ENCODE measurements at regions of chr12 and their contacts with region 1.

Region 1: GRCh38 chr12:3186546-3187215 is 109.5 kb downstream of the TSPAN9 start:
- DNase-seq: no peak
- H3K4me3 ChIP-seq: no peak overlapping the region
- H3K27ac ChIP-seq: no peak overlapping the region
- H3K4me1 ChIP-seq: peaks cover 0 to 5% (median 0%) of the 10 kb centered on the region in 4 experiments; a peak in 2 of 7 replicates
- H3K27me3 ChIP-seq: no peaks in the 10 kb centered on the region
- CTCF ChIP-seq: no peak
- EP300 ChIP-seq: no peak
- POLR2A ChIP-seq: no peak
- RAD21 ChIP-seq: no peak

Region 2: DNA sequence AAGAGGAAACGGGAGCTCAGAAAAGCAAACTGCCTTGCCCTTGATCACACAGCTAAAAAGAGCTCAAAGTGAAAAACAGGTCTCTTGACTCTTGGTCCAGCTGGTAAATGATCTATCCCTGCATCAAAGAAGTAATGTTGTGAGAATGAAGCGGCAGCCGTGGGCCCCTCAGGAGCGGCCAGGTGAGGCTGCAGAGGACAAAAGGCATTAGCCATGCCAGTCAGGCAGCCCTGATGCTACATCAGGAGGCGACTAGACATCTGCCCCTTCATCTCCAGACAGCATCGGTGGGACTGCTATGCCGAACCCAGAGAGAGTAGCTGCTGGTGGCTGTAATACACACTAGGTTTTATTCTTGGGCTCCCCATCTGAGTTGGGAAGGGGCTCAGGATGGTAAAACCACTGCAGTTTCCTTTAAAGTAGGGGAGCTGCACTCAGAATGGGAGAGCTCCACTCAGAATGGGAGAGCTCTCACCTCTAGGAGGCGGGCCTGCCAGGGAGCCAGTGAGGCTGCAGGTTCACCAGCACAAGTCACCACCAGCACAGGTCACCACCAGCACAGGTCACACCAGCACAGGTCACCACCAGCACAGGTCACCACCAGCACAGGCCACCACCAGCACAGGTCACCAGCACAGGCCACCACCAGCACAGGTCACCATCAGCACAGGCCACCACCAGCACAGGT is 10.6 kb after region 1 on chr12:
- CTCF ChIA-PET with region 1: interaction called, 83 read pairs
- POLR2A ChIA-PET with region 1: interaction called, 8 read pairs
- DNase-seq: no peak
- H3K4me3 ChIP-seq: no peak overlapping the region
- H3K27ac ChIP-seq: no peak overlapping the region
- H3K4me1 ChIP-seq: peaks cover 0 to 15% (median 6%) of the 10 kb centered on the region in 4 experiments; a peak in 6 of 7 replicates
- H3K27me3 ChIP-seq: peaks cover 10 to 34% (median 27%) of the 10 kb centered on the region in 4 experiments
- CTCF ChIP-seq: no peak
- EP300 ChIP-seq: no peak
- POLR2A ChIP-seq: no peak
- RAD21 ChIP-seq: no peak

Region 3: DNA sequence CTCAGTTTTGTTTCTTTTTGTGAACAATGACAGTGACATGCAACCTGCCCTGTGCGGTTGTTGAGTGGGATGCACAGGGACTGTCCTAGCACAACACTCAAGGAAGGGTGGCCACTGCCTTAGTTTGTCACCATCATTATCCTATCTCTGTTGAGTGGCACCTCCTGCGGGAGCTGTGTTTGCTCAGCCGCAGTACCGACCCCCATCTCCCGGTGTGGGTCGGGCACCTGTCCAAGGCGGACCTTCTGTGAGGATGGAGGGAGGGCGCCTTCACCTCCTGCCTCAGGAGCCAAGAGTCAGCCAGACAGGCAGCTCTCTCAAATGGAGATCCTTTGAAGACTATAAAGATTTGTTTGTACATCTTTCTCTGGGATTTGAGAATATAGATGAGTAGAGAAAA is 32.6 kb after region 1 on chr12:
- CTCF ChIA-PET with region 1: no interaction called
- POLR2A ChIA-PET with region 1: no interaction called
- DNase-seq: no peak
- H3K4me3 ChIP-seq: no peak overlapping the region
- H3K27ac ChIP-seq: no peak overlapping the region
- H3K4me1 ChIP-seq: peaks cover 2 to 10% (median 8%) of the 10 kb centered on the region in 4 experiments
- H3K27me3 ChIP-seq: no peaks in the 10 kb centered on the region
- CTCF ChIP-seq: no peak
- EP300 ChIP-seq: no peak
- POLR2A ChIP-seq: no peak
- RAD21 ChIP-seq: no peak

Measured in H1 (cell line).